ENCODE measurements at regions of chr6 and their contacts with region 1.

Region 1: DNA sequence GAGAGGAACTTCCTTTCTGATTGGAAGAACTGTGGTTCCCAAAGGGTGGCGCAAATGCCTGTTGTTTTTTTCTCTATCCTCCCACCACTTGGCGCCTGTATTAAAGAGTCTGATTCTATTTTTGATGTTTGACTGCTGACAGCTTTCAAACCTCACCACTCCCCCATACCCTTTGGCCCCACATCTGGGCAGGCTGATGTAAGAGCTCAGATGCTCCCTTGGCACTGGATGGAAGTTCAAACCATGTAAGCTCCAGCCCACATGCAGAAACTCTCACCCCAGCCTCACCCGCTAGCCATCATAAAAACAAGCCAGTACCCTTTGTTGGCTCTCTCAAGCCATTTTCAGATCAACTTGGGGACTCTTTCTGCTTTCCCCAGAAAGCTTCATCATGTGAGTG is 20.0 kb upstream of the TMEM14A start:
- DNase-seq: no peak
- ATAC-seq: no peak
- H3K4me3 Mint-ChIP-seq: no peak overlapping the region
- H3K27ac Mint-ChIP-seq: no peak overlapping the region
- H3K4me1 Mint-ChIP-seq: peaks cover 22% of the 10 kb centered on the region
- H3K27me3 Mint-ChIP-seq: no peaks in the 10 kb centered on the region
- CTCF ChIP-seq: no peak

Region 2: DNA sequence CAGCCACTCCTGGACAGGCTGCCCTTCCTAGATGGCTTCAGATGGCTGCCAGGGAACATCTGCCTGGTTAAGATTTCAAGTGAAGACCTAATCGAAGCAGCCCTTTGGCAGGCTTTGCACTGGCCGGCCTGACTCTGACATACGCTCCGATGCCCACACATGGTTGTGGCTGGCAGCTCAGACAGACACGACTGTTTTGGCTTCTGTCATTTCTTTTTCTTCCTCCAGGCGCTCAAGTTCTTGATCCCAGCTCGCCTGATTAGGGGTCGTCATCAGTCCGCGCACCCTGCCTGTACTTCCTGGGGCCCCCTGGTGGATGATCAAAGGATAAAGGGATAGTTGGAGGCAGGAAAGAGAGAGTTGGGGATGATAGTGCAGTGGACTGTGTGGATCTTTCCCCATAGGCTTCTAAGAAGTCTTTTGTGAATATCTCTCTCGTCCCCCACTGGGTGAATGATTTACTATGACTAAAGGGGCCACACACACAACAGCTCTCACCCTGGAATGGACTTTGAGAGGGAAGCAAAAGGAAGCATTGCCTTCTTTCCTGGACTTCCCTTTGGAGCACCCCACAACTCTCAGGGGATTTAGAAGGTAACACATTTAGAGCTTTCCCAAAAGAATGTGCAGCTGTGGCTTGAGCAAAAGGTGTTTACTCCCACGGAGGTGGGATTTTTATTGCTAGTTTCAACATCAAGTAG is 52.7 kb before region 1 on chr6:
- CTCF ChIA-PET with region 1: interaction called, 11 read pairs
- POLR2A ChIA-PET with region 1: no interaction called
- DNase-seq: peak; percentile 86
- ATAC-seq: peak; percentile 82
- H3K4me3 Mint-ChIP-seq: peak overlapping the region; percentile 43
- H3K27ac Mint-ChIP-seq: peak overlapping the region; percentile 34; the same call in 1 of the 2 replicates
- H3K4me1 Mint-ChIP-seq: peaks cover 22% of the 10 kb centered on the region
- H3K27me3 Mint-ChIP-seq: no peaks in the 10 kb centered on the region; the same call in 1 of the 2 replicates
- CTCF ChIP-seq: 0 out of 2 replicates have a peak, but pooled peaks have one; percentile 55

Region 3: GRCh38 chr6:52635049-52635577 is 15.8 kb before region 1 on chr6:
- CTCF ChIA-PET with region 1: interaction called, 31 read pairs
- POLR2A ChIA-PET with region 1: interaction called, 6 read pairs
- DNase-seq: no peak
- ATAC-seq: peak; percentile 72
- H3K4me3 Mint-ChIP-seq: no peak overlapping the region
- H3K27ac Mint-ChIP-seq: 0 out of 2 replicates have a peak overlapping the region, but pooled peaks have one; percentile 1
- H3K4me1 Mint-ChIP-seq: peaks cover 19% of the 10 kb centered on the region
- H3K27me3 Mint-ChIP-seq: peaks cover 2% of the 10 kb centered on the region; the same call in 1 of the 2 replicates
- CTCF ChIP-seq: no peak

Region 4: GRCh38 chr6:52640170-52640569 is 10.8 kb before region 1 on chr6:
- CTCF ChIA-PET with region 1: interaction called, 31 read pairs
- POLR2A ChIA-PET with region 1: interaction called, 6 read pairs
- DNase-seq: no peak
- ATAC-seq: peak; percentile 70
- H3K4me3 Mint-ChIP-seq: no peak overlapping the region
- H3K27ac Mint-ChIP-seq: no peak overlapping the region
- H3K4me1 Mint-ChIP-seq: peaks cover 11% of the 10 kb centered on the region
- H3K27me3 Mint-ChIP-seq: peaks cover 3% of the 10 kb centered on the region
- CTCF ChIP-seq: no peak

Region 5: DNA sequence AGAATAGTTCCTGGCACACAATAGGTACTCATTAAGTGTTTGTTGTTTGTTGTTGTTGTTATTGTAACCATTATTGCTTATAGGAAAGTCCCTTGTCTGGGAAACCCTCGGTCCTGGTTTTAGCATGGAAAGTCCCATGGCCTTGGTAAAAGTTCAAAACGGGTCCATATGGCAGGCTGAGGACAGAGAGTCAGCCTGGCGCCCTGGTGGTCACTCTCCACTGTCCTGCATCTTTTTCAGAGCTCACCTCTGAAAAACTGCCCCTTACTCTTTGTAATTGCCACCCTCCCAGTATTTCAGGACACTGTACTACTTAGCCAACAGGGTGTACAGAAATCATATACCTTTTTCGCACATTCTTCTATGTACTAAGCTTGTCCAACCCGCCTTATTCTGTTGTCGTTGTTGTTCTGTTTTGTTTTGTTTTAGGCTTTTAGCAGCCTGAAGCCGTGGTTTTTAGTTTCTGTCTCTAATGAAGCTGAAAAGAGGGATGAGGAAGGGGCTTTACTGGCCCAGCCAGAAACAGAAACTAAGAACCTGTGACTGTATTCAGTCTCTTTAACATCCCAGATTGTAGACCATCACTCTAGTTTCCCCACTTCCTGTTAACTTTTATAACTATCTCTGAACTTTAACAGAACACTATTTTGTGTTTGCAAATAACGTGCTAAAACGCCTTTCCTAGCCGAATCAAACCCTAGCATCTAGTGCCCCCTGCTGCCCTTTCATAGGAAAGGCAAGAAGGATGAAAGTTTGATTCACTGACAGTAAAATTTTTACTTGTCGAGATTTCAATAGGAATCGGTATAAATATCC is 12.4 kb after region 1 on chr6:
- CTCF ChIA-PET with region 1: interaction called, 42 read pairs
- POLR2A ChIA-PET with region 1: no interaction called
- DNase-seq: peak; percentile 42
- ATAC-seq: no peak
- H3K4me3 Mint-ChIP-seq: no peak overlapping the region
- H3K27ac Mint-ChIP-seq: no peak overlapping the region
- H3K4me1 Mint-ChIP-seq: no peaks in the 10 kb centered on the region
- H3K27me3 Mint-ChIP-seq: peaks cover 3% of the 10 kb centered on the region; the same call in 1 of the 2 replicates
- CTCF ChIP-seq: peak; percentile 71

Region 6: DNA sequence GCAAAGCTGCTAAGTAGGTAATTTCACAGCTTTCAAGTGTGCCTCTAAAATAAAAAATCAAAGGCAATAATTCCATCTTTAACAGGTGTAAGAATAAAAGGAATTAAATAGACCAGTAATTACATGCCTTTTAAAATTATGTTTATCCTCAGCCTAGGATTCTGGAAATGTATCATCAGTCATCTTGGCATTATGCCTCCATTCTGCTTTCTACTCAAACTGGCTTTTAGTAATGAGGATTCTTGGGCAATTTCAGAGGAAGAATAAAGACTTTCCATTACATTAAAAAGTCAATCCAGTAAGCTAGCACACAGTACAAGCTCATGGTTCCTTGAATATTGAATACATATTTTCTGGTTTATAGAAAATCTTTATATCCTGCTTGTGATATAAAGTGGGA is 67.6 kb after region 1 on chr6:
- CTCF ChIA-PET with region 1: no interaction called
- POLR2A ChIA-PET with region 1: no interaction called
- DNase-seq: no peak
- ATAC-seq: no peak
- H3K4me3 Mint-ChIP-seq: no peak overlapping the region
- H3K27ac Mint-ChIP-seq: no peak overlapping the region
- H3K4me1 Mint-ChIP-seq: 0 out of 2 replicates have a peak, but pooled peaks cover 2% of the 10 kb centered on the region
- H3K27me3 Mint-ChIP-seq: no peaks in the 10 kb centered on the region
- CTCF ChIP-seq: no peak

Measured in WTC11 (cell line).